Posterior vena cava (tissue), 2 donors: ENCODE measurements at regions of chr2 and their contacts with region 1.

Region 1: GRCh38 chr2:241339839-241340630 is 16.1 kb upstream of the FARP2 start:
- DNase-seq: no peak

Region 2: GRCh38 chr2:241248897-241249296 is 91.1 kb before region 1 on chr2:
- intact Hi-C with region 1: loop called in 1 of 2 experiments (anchors 10 kb)
- DNase-seq: peak; percentile 46

Region 3: GRCh38 chr2:241271641-241272297 is 68.3 kb before region 1 on chr2:
- intact Hi-C with region 1: no loop called
- DNase-seq: peak; percentile 96

Region 4: DNA sequence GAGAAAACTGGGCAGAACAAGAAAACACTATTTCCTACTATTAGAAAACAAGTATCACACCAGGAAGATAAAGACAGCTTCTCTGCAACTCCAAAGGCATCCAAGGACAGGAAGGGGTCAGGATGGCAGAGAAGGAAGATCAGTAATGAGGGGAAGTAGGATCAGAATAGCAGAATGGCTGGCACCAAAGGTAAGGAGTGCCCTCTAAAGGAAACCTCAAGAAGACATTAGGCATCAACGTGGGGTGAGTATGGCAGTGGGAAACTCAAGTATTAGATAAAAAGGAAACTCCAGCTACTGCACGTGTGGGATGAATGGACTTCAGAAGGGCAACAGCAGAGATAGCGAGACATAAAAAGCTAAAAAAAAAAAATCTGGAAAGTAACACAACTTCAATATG is 50.4 kb before region 1 on chr2:
- intact Hi-C with region 1: no loop called
- DNase-seq: no peak

Region 5: GRCh38 chr2:241363316-241363879 is 23.4 kb after region 1 on chr2:
- intact Hi-C with region 1: no loop called
- DNase-seq: no peak